ENCODE measurements at regions of chr9 and their contacts with region 1.

Region 1: DNA sequence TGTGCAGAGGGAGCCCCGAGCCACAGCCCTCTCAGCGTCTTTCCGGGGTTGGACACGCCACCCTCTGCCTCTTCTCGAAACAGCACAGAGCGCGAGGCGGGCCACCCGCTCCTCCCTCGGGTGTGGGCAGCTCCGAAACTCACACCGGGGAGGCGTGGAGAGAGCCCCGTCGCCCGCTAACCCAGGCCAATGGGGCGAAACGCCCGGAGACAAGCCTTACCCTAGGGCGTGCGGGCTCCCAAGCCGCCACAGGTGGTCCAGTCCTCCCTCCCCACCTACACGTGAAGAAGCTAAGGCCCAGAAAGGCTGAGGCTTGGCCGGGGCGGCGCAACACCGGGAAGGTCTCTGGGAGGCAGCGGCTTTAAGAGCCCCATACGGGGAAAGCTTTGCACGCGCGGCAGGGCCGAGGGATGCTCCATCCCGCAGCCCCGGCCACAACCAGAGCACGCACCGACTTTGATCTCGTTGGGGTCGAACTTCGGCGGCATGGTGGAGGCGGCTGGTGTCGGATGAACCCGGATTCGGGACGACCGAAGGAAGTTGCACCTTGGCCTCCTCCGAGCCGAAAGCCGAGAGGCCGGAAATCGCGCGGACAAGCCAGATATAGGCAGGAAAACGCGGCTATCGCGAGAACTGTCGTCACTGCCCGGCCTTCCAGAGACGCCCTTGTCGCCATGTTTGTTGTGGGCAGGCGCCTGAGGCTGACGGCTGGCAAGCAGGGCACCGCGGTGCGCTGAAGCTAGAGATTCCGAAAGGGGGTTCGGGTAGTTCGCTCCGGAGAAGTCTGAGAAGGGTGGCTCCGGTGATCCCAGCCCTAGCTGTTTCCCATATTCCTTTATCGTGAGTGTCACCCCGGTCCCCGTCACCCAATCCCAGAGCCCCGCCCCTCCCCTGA is at the starts of genes LRSAM1 and RPL12:
- DNase-seq: peak; percentile 99 to 100
- ATAC-seq: peak; percentile 83 to 91 (median 85)
- H3K4me3 ChIP-seq: peak within 1 kb of the TSS; percentile 88
- H3K4me3 Mint-ChIP-seq: peak within 1 kb of the TSS; percentile 96
- H3K27ac ChIP-seq: peak within 1 kb of the TSS; percentile 84
- H3K27ac Mint-ChIP-seq: peak within 1 kb of the TSS; percentile 93
- H3K4me1 ChIP-seq: peaks cover 32% of the 10 kb centered on the region
- H3K4me1 Mint-ChIP-seq: peaks cover 46 to 55% of the 10 kb centered on the region in 2 donors
- H3K27me3 ChIP-seq: no peaks in the 10 kb centered on the region
- H3K27me3 Mint-ChIP-seq: no peaks in the 10 kb centered on the region
- CTCF ChIP-seq: no peak
- total RNA-seq, gene LRSAM1: 17.4 to 24.6 (median 20.7) TPM
- total RNA-seq, gene RPL12: 561 to 770 (median 724) TPM

Region 2: GRCh38 chr9:127396808-127397497 is 54.1 kb before region 1 on chr9 and contains the start of gene SLC2A8:
- intact Hi-C with region 1: loop called (anchors 2 kb)
- DNase-seq: peak; percentile 96 to 97
- ATAC-seq: peak; percentile 90 to 98 (median 92)
- H3K4me3 ChIP-seq: peak within 1 kb of the TSS; percentile 43
- H3K4me3 Mint-ChIP-seq: peak within 1 kb of the TSS; percentile 83
- H3K27ac ChIP-seq: no peak within 1 kb of the TSS
- H3K27ac Mint-ChIP-seq: peak within 1 kb of the TSS; percentile 57 to 84
- H3K4me1 ChIP-seq: peaks cover 23% of the 10 kb centered on the region
- H3K4me1 Mint-ChIP-seq: peaks cover 9 to 13% of the 10 kb centered on the region in 2 donors
- H3K27me3 ChIP-seq: peaks cover 14% of the 10 kb centered on the region
- H3K27me3 Mint-ChIP-seq: peaks cover 11 to 14% of the 10 kb centered on the region in 2 donors
- CTCF ChIP-seq: no peak
- total RNA-seq, gene SLC2A8: 21.1 to 30.6 (median 30.0) TPM